Activated B cell treated with CpG ODN at 0.5 μM for 24 hours (primary cell): ENCODE measurements at regions of chr3 and their contacts with region 1.

Region 1: DNA sequence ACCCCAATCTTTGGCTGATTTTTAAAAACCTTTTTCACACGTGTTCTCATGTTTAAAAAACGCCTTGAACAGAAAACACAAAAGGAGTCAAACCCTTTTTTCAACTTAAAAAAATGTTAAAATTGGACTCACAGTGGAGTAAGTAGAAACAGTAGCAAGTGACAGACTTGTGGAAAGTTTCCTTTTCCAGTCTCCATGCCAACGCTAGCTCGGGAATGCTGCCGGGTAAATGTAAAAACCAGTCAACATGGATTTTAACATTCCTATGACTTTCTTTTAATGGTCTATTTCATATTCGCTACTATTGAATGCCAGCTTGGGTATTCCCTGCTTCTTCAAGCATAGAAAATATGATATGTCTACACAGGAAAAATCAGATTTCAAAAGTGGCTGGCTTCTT is 1.6 kb upstream of the PROK2 start:
- DNase-seq: no peak
- ATAC-seq: no peak
- H3K4me3 Mint-ChIP-seq: no peak overlapping the region
- H3K27ac Mint-ChIP-seq: no peak overlapping the region
- H3K4me1 Mint-ChIP-seq: peaks cover 17% of the 10 kb centered on the region
- H3K27me3 Mint-ChIP-seq: peaks cover 51% of the 10 kb centered on the region
- CTCF ChIP-seq: no peak

Region 2: DNA sequence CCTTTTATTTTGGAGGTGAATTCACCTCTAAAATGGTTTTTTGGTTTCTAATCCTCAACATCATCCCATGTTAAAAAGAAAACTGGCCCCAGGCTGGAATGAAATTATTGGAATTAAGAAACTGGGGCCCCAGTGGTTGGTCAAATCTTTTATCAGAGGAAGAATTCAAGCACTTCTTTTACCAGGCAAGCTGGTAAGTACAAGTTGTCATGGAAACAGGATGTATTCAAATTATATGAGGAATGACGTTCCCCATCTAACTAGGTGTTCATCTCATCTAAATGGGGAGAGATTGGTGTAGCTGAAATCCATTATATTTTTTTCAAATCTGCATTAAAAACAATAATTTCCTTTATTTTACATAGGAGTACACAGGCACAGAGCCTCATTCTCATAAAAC is 51.7 kb before region 1 on chr3:
- CTCF ChIA-PET with region 1: no interaction called
- POLR2A ChIA-PET with region 1: no interaction called
- intact Hi-C with region 1: no loop called
- DNase-seq: no peak
- ATAC-seq: no peak
- H3K4me3 Mint-ChIP-seq: no peak overlapping the region
- H3K27ac Mint-ChIP-seq: no peak overlapping the region
- H3K4me1 Mint-ChIP-seq: peaks cover 1% of the 10 kb centered on the region
- H3K27me3 Mint-ChIP-seq: peaks cover 25% of the 10 kb centered on the region
- CTCF ChIP-seq: no peak

Region 3: GRCh38 chr3:72473156-72473555 is 686.6 kb after region 1 on chr3:
- CTCF ChIA-PET with region 1: no interaction called
- POLR2A ChIA-PET with region 1: interaction called, 12 read pairs
- intact Hi-C with region 1: no loop called
- DNase-seq: no peak
- ATAC-seq: no peak
- H3K4me3 Mint-ChIP-seq: no peak overlapping the region
- H3K27ac Mint-ChIP-seq: no peak overlapping the region
- H3K4me1 Mint-ChIP-seq: peaks cover 7% of the 10 kb centered on the region
- H3K27me3 Mint-ChIP-seq: peaks cover 4% of the 10 kb centered on the region
- CTCF ChIP-seq: no peak